Natural killer cell (primary cell): ENCODE measurements at regions of chr19 and their contacts with region 1.

Region 1: GRCh38 chr19:8513687-8514504 is at the start of gene ZNF414:
- DNase-seq: peak; percentile 98 to 99
- ATAC-seq: peak; percentile 81 to 92 (median 84)
- H3K4me3 ChIP-seq: peak within 1 kb of the TSS; percentile 38
- H3K4me3 Mint-ChIP-seq: peak within 1 kb of the TSS; percentile 97
- H3K27ac ChIP-seq: peak within 1 kb of the TSS; percentile 82
- H3K27ac Mint-ChIP-seq: peak within 1 kb of the TSS; percentile 94 to 100
- H3K4me1 ChIP-seq: peaks cover 68% of the 10 kb centered on the region
- H3K4me1 Mint-ChIP-seq: peaks cover 42 to 61% of the 10 kb centered on the region in 2 donors
- H3K27me3 ChIP-seq: no peaks in the 10 kb centered on the region
- H3K27me3 Mint-ChIP-seq: no peaks in the 10 kb centered on the region
- CTCF ChIP-seq: no peak
- total RNA-seq, gene ZNF414: 42.1 to 46.4 (median 42.3) TPM

Region 2: GRCh38 chr19:8526345-8527067 is 12.6 kb after region 1 on chr19:
- intact Hi-C with region 1: no loop called
- DNase-seq: no peak
- ATAC-seq: peak in 1 of 3 donors; percentile 27
- H3K4me3 ChIP-seq: no peak overlapping the region
- H3K4me3 Mint-ChIP-seq: no peak overlapping the region
- H3K27ac ChIP-seq: no peak overlapping the region
- H3K27ac Mint-ChIP-seq: peak overlapping the region in 1 of 2 donors; percentile 63
- H3K4me1 ChIP-seq: no peaks in the 10 kb centered on the region
- H3K4me1 Mint-ChIP-seq: peaks cover 22 to 23% of the 10 kb centered on the region in 2 donors
- H3K27me3 ChIP-seq: no peaks in the 10 kb centered on the region
- H3K27me3 Mint-ChIP-seq: no peaks in the 10 kb centered on the region
- CTCF ChIP-seq: no peak

Region 3: GRCh38 chr19:8569066-8569771 is 55.3 kb after region 1 on chr19:
- intact Hi-C with region 1: loop called (anchors 2 kb)
- DNase-seq: peak; percentile 70 to 89
- ATAC-seq: peak; percentile 62 to 82 (median 74)
- H3K4me3 ChIP-seq: peak overlapping the region; percentile 9
- H3K4me3 Mint-ChIP-seq: peak overlapping the region; percentile 91
- H3K27ac ChIP-seq: peak overlapping the region; percentile 83
- H3K27ac Mint-ChIP-seq: peak overlapping the region; percentile 90 to 97
- H3K4me1 ChIP-seq: peaks cover 100% of the 10 kb centered on the region
- H3K4me1 Mint-ChIP-seq: peaks cover 71 to 84% of the 10 kb centered on the region in 2 donors
- H3K27me3 ChIP-seq: no peaks in the 10 kb centered on the region
- H3K27me3 Mint-ChIP-seq: no peaks in the 10 kb centered on the region
- CTCF ChIP-seq: no peak

Region 4: DNA sequence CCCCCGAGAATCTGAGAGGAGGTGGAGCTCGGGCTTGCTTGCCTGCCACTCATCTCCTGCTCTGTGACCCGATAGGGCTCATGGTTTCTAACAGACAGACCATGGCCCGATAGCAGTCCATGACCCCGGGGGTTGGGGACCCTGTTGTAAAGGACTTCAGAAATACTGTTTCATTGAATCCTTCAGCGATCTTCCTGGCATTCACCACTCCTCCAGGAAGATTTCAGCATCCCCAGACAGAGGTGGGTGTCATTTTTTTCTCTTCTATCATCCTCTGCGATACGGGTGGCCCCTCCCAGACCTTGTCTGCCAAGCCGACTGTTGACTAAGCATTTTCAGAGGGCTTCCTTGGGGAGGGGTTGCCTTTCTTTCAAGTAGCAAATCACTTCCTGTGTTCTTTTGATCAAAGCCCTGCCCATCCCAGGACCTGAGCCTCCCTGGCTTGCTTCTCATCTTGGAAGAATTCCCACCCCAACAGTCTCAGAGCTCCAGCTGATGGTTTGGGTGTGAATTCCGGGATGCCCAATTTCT is 61.6 kb after region 1 on chr19:
- intact Hi-C with region 1: loop called (anchors 2 kb)
- DNase-seq: peak; percentile 47 to 78
- ATAC-seq: peak; percentile 48 to 66 (median 49)
- H3K4me3 ChIP-seq: peak overlapping the region; percentile 85
- H3K4me3 Mint-ChIP-seq: peak overlapping the region; percentile 91
- H3K27ac ChIP-seq: peak overlapping the region; percentile 68
- H3K27ac Mint-ChIP-seq: peak overlapping the region; percentile 90 to 97
- H3K4me1 ChIP-seq: peaks cover 85% of the 10 kb centered on the region
- H3K4me1 Mint-ChIP-seq: peaks cover 69 to 84% of the 10 kb centered on the region in 2 donors
- H3K27me3 ChIP-seq: no peaks in the 10 kb centered on the region
- H3K27me3 Mint-ChIP-seq: no peaks in the 10 kb centered on the region
- CTCF ChIP-seq: peak; percentile 4